ENCODE measurements at regions of chr17 and their contacts with region 1.

Region 1: DNA sequence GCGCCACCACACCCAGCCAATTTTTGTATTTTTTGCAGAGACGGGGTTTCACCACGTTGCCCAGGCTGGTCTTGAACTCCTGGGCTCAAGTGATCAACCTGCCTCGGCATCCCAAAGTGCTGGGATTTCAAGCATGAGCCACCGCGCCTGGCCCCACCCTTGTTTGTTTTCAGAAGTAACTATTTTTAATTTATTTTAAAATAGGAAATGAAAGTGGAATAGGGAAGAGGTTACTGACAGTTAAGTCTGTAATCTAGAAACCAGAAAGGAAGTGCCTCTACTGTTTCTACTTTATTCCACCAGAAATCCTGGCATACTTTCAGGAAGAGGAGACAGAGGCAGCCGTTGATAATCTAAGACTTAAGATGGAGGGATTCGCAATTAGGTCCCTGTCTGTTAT is 225.6 kb downstream of the TANC2 start:
- DNase-seq: no peak

Region 2: DNA sequence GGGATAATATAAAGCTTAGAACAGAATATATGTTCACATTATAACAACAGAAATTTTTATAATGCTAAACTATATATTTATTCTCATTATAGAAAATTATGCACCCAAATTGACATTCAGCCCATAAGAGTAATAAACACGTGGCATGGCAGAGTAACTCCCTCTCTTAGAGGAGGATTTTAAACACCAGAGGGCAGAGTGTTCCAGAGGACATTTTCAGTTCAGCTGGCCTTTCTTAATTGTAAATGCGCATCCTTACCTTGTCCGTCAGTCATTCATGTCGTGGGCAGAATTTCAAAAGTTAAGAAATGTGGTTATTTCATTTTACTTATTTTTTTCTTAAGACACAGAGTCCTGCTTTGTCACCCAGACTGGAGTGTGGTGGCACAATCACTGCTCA is 78.4 kb before region 1 on chr17:
- intact Hi-C with region 1: loop called (anchors 5 kb)
- DNase-seq: no peak

Region 3: GRCh38 chr17:63262751-63263476 is 71.3 kb after region 1 on chr17:
- intact Hi-C with region 1: no loop called
- DNase-seq: no peak